Esophagus muscularis mucosa (tissue), 4 donors: ENCODE measurements at regions of chr17 and their contacts with region 1.

Region 1: DNA sequence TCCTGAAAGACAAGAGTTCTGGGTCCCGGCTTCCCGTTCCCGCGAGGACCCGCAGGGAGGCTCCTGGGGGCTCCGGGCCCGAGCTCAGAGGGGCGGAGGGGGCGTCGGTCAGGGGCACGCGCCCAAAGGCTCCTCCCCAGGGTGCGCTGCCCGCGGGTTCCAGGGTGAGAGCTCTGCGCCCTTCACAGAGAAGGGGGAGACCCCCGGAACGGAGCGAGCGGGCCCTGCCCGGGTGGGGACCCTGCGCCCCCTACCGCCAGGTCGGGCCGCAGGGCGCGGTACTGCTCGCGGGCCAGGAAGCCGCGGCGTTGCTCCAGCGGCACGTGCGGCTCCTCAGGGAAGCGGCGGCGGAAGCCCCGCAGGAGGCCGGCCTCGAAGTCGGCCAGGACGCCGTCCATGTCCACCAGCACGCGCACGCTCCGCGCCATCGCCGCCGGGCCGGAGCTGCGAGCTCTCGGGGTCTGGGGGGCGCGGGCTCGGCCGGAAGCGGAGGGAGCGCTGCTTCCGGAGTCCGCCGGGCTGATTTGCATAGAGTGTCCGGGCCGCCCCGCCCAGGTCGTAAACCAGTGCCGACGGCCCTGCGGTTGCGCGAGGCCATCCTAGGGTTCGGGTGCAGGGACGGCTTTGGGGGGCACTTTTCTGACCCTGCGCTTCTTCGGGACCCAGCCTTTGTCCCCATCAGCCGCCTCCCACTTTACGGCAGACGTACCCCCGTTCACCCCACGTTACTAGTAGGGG is at the start of gene NT5C:
- DNase-seq: no peak
- H3K4me3 ChIP-seq: peak within 1 kb of the TSS; percentile 70 to 89 (median 85)
- H3K27ac ChIP-seq: peak within 1 kb of the TSS; percentile 85 to 94 (median 90)
- H3K4me1 ChIP-seq: peaks cover 10 to 28% (median 21%) of the 10 kb centered on the region in 4 donors
- H3K27me3 ChIP-seq: no peaks in the 10 kb centered on the region
- CTCF ChIP-seq: peak; percentile 63 to 78 (median 73)
- EP300 ChIP-seq: no peak
- POLR2A ChIP-seq: no peak
- total RNA-seq, gene NT5C: 70.6 to 98.7 (median 75.1) TPM

Region 2: DNA sequence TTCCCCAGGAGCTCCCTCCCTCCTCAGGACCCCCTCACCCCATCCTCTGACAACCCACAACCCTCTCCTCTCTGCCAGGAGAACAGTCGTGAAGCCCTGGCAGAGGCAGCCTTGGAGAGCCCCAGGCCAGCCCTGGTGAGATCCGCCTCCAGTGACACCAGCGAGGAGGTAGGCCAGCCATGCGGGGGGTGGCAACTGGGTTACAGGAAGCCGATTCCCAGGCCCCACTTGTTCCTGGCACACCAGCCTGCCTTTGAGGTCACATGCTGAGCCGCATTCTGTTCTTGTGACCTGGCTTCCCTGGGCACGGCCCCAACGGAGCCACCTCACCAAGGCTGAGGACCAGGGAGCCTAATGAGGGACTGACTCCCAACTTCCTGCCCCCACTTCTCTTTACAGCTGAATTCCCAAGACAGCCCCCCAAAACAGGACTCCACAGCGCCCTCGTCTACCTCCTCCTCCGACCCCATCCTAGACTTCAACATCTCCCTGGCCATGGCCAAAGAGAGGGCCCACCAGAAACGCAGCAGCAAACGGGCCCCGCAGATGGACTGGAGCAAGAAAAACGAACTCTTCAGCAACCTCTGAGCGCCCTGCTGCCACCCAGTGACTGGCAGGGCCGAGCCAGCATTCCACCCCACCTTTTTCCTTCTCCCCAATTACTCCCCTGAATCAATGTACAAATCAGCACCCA is 363.2 kb before region 1 on chr17:
- intact Hi-C with region 1: no loop called
- DNase-seq: no peak
- H3K4me3 ChIP-seq: no peak overlapping the region
- H3K27ac ChIP-seq: peak overlapping the region in 2 of 4 donors; percentile 27 to 44
- H3K4me1 ChIP-seq: peaks cover 12 to 28% (median 19%) of the 10 kb centered on the region in 4 donors
- H3K27me3 ChIP-seq: peaks cover 0 to 4% (median 0%) of the 10 kb centered on the region in 4 donors
- CTCF ChIP-seq: no peak
- EP300 ChIP-seq: no peak
- POLR2A ChIP-seq: no peak

Region 3: GRCh38 chr17:75182569-75183450 is 51.4 kb after region 1 on chr17 and contains the start of gene SUMO2:
- intact Hi-C with region 1: loop called (anchors 5 kb)
- DNase-seq: peak; percentile 99
- H3K4me3 ChIP-seq: peak within 1 kb of the TSS; percentile 97 to 100 (median 98)
- H3K27ac ChIP-seq: peak within 1 kb of the TSS; percentile 95 to 100 (median 98)
- H3K4me1 ChIP-seq: peaks cover 25 to 41% (median 39%) of the 10 kb centered on the region in 4 donors
- H3K27me3 ChIP-seq: no peaks in the 10 kb centered on the region
- CTCF ChIP-seq: peak in 1 of 3 experiments; percentile 63
- EP300 ChIP-seq: no peak
- POLR2A ChIP-seq: peak; percentile 58
- total RNA-seq, gene SUMO2: 64.4 to 101 (median 80.0) TPM